Psoas muscle (tissue), 8 donors: ENCODE measurements at regions of chr3 and their contacts with region 1.

Region 1: GRCh38 chr3:125990253-125990970 is 21.4 kb downstream of the ROPN1B start:
- DNase-seq: peak; percentile 87 to 92
- ATAC-seq: peak; percentile 96 to 99 (median 98)
- H3K4me3 ChIP-seq: peak overlapping the region; percentile 76
- H3K27ac ChIP-seq: peak overlapping the region; percentile 78
- H3K4me1 ChIP-seq: peaks cover 13% of the 10 kb centered on the region
- H3K27me3 ChIP-seq: no peaks in the 10 kb centered on the region
- CTCF ChIP-seq: no peak

Region 2: GRCh38 chr3:126083913-126084767 is 93.7 kb after region 1 on chr3 and contains the start of gene SLC41A3:
- intact Hi-C with region 1: loop called in 1 of 2 experiments (anchors 5 kb)
- DNase-seq: peak; percentile 92 to 93
- ATAC-seq: peak; percentile 76 to 82 (median 78)
- H3K4me3 ChIP-seq: peak within 1 kb of the TSS; percentile 83
- H3K27ac ChIP-seq: peak within 1 kb of the TSS; percentile 97
- H3K4me1 ChIP-seq: peaks cover 17% of the 10 kb centered on the region
- H3K27me3 ChIP-seq: no peaks in the 10 kb centered on the region
- CTCF ChIP-seq: peak; percentile 49
- total RNA-seq, gene SLC41A3: 37.5 to 58.9 (median 45.3) TPM

Region 3: GRCh38 chr3:126180477-126181397 is 190.3 kb after region 1 on chr3 and contains the start of gene ALDH1L1:
- intact Hi-C with region 1: loop called in 1 of 2 experiments (anchors 10 kb)
- DNase-seq: peak; percentile 88 to 96
- ATAC-seq: peak; percentile 90 to 95 (median 93)
- H3K4me3 ChIP-seq: peak within 1 kb of the TSS; percentile 82
- H3K27ac ChIP-seq: peak within 1 kb of the TSS; percentile 98
- H3K4me1 ChIP-seq: peaks cover 19% of the 10 kb centered on the region
- H3K27me3 ChIP-seq: peaks cover 0 to 5% (median 0%) of the 10 kb centered on the region in 3 donors
- CTCF ChIP-seq: no peak
- total RNA-seq, gene ALDH1L1: 34.5 to 121 (median 62.7) TPM

Region 4: DNA sequence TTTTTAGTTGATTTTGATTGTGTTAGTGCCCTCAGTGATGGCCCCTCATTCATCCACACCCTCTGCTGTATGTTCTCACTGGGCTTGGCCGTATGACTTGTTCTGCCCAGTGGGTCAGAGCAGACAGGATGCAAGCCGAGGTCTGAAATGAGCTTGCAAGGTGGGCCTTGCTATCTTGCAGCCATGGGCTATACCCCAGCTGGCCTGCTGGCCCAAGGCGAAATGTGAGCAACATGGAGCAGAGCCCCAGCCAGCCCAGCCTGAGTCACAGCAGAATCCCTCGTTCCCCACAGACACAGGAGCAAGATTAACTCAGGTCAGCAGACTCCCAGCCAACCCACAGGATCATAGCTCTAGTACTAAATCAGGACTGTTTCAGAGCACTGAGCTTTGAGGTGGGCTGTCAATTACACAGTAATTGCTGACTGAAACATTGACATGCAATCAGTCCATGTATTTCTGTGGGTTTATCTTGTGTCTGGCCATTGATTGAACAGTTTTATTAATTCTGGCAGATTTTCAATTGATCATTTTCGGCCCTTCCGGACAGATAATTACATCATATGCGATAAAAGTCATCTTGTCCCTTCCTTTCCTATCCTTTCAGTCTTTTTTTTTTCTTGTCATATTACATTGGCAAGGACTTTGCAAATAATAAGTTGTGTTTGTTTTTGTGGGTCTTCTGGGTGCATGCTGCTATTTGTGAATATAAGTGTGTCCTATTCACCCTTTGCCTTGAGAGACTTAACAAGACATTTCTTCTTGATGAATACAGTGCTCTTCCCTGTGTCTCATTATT is 339.7 kb after region 1 on chr3:
- intact Hi-C with region 1: no loop called
- DNase-seq: peak in 1 of 2 donors; percentile 32
- ATAC-seq: no peak
- H3K4me3 ChIP-seq: no peak overlapping the region
- H3K27ac ChIP-seq: no peak overlapping the region
- H3K4me1 ChIP-seq: no peaks in the 10 kb centered on the region
- H3K27me3 ChIP-seq: no peaks in the 10 kb centered on the region
- CTCF ChIP-seq: no peak